Gastrocnemius medialis (tissue), 4 donors: ENCODE measurements at regions of chr4 and their contacts with region 1.

Region 1: DNA sequence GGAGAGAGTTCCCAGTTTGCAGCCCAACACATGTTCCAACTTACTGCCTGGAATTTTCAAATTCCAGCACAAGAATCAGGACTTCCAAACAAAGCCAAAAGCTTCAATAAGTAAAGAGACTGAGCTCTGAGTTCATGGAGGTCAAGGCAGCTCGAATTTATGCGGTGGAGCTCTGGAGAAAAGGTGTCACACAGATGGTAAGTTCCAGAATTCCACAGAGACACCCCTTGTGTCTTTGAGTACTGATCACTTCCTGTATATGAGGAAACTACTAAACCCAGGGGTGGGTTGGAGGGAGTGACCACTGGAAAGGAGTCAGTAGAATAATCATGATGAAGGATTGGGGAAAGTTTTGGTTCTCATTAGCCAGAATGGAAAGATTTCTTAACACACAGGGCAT is 118.5 kb upstream of the GUCY1A1 start:
- DNase-seq: peak; percentile 4 to 18
- ATAC-seq: peak; percentile 42 to 56
- H3K4me3 ChIP-seq: no peak overlapping the region
- H3K27ac ChIP-seq: no peak overlapping the region
- H3K4me1 ChIP-seq: no peaks in the 10 kb centered on the region
- H3K27me3 ChIP-seq: no peaks in the 10 kb centered on the region
- CTCF ChIP-seq: no peak
- POLR2A ChIP-seq: no peak

Region 2: GRCh38 chr4:155604718-155605626 is 56.8 kb after region 1 on chr4:
- in situ Hi-C with region 1: no loop called
- intact Hi-C with region 1: loop called (anchors 5 kb)
- DNase-seq: no peak
- ATAC-seq: no peak
- H3K4me3 ChIP-seq: no peak overlapping the region
- H3K27ac ChIP-seq: no peak overlapping the region
- H3K4me1 ChIP-seq: no peaks in the 10 kb centered on the region
- H3K27me3 ChIP-seq: no peaks in the 10 kb centered on the region
- CTCF ChIP-seq: no peak
- POLR2A ChIP-seq: no peak

Region 3: DNA sequence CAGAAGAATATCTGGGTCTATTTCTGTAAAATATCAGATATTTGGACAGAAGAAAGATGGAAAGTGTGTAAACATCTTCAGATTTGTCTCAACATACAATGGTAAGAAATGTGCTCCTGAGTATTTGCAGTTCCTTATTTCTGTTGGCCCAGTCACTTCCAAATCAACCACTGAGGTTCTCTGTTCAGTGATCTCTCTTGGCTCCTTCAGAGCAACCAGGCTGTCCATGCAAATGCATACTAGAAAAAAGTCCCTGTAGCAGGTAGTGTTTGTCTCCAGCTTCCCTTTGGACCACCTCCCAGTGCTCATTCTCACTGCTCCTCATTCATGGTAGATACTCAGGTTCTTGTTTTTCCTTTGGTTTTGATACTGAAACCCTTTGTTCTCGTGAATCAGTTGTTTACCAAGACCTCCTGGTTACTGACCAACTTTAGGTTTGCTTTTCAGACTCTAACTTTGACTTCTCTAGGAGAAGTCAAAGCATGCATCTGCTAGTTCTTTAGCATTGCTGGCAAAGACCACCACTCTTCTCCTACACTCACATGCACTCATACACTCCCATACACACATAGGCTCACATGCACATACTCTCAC is 289.1 kb after region 1 on chr4:
- in situ Hi-C with region 1: no loop called
- intact Hi-C with region 1: no loop called
- DNase-seq: no peak
- ATAC-seq: no peak
- H3K4me3 ChIP-seq: no peak overlapping the region
- H3K27ac ChIP-seq: no peak overlapping the region
- H3K4me1 ChIP-seq: no peaks in the 10 kb centered on the region
- H3K27me3 ChIP-seq: no peaks in the 10 kb centered on the region
- CTCF ChIP-seq: no peak
- POLR2A ChIP-seq: no peak